IMR-90 (cell line): ENCODE measurements at regions of chr2 and their contacts with region 1.

Region 1: GRCh38 chr2:174412256-174412655 is 16.7 kb downstream of the SCRN3 start:
- DNase-seq: no peak
- ATAC-seq: no peak
- H3K4me3 ChIP-seq: no peak overlapping the region
- H3K27ac ChIP-seq: no peak overlapping the region
- H3K4me1 ChIP-seq: no peaks in the 10 kb centered on the region
- H3K27me3 ChIP-seq: no peaks in the 10 kb centered on the region
- CTCF ChIP-seq: no peak
- POLR2A ChIP-seq: no peak
- RAD21 ChIP-seq: no peak

Region 2: DNA sequence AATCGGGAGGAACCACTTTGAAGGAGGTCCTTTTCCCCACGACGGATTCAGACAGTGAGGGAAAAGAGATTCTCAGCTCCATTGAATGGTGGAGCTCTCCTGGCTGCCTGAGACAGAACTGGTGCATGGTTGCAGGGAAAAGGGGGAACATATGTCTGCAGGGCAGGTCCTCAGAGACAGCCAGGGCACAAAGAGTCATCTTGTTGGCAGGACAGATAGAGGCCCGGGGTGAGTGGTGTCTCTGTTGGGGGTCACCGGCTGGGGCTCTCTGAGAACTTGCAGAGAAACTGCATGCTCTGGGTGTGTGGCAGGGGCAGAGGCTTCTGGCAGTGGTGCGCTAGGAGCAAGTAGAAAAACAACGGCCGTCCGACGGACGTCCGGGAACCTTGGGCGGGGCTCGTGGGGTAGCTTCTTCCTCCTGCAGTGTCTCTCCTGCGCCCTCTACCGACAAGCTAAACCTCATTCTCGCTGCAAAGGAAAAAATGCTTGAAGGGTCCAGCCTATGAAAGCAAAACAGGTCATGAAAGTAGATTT is 963.3 kb before region 1 on chr2:
- CTCF ChIA-PET with region 1: no interaction called
- POLR2A ChIA-PET with region 1: interaction called, 10 read pairs
- dilution Hi-C with region 1: no loop called
- in situ Hi-C with region 1: no loop called
- intact Hi-C with region 1: no loop called
- DNase-seq: peak; percentile 73
- ATAC-seq: peak; percentile 97
- H3K4me3 ChIP-seq: peak overlapping the region; percentile 25
- H3K27ac ChIP-seq: peak overlapping the region; percentile 13; the same call in 1 of the 2 replicates
- H3K4me1 ChIP-seq: no peaks in the 10 kb centered on the region
- H3K27me3 ChIP-seq: peaks cover 14% of the 10 kb centered on the region
- CTCF ChIP-seq: peak; percentile 79
- POLR2A ChIP-seq: no peak
- RAD21 ChIP-seq: peak; percentile 67